PC-9 (cell line): ENCODE measurements at regions of chr3 and their contacts with region 1.

Region 1: DNA sequence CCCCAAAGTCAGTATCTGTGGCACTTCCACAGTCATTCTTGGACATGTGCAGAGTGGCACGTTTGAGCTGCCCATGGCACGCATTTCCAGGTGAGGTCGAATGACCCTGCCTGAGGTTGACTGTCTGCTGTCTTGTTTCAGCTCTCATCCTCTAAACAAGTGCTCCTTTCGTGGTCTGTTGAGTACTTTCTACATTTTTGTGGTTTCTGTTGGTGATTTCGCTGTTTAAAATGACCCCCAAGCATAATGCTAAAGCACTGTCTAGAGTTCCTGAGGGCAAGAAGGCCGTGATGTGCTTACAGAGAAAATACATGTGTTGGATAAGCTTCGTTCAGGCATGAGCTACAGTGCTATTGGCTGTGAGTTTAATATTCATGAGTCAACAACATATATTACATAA is 40.0 kb upstream of the SAMMSON start:
- DNase-seq: no peak
- H3K4me3 ChIP-seq: no peak overlapping the region
- H3K27ac ChIP-seq: no peak overlapping the region
- H3K4me1 ChIP-seq: no peaks in the 10 kb centered on the region
- H3K27me3 ChIP-seq: no peaks in the 10 kb centered on the region
- CTCF ChIP-seq: no peak

Region 2: DNA sequence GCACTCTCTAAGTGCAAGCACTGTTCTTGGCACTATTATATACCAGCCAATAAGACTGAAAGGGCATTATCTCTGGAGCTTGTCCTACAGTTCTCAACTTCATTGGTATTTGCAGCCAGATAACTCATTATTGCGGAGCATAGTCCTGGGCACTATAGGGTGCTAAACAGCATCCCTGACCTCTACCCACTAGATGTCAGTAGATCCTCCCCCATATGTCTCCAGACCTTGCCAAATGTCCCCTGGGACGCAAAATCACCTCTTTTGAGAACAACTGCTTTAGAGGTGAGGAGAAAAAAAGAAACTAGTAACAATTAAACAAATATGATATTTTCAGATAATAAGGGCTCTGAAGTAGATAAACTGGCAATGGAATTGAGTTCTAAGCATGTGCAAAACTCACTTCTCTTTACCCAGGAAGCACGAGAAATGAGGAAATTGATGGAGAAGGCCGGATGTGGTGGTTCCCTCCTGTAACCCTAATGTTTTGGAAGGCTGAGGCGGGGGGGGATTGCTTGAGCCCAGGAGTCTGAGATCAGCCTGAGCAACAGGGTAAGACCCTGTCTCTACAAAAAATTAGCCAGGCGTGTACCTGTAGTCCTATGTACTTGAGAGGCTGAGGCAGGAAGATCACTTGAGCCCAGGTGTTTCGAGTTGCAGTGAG is 635.1 kb before region 1 on chr3:
- CTCF ChIA-PET with region 1: no interaction called
- POLR2A ChIA-PET with region 1: no interaction called
- intact Hi-C with region 1: loop called (anchors 10 kb)
- DNase-seq: no peak
- H3K4me3 ChIP-seq: no peak overlapping the region
- H3K27ac ChIP-seq: no peak overlapping the region
- H3K4me1 ChIP-seq: no peaks in the 10 kb centered on the region
- H3K27me3 ChIP-seq: no peaks in the 10 kb centered on the region
- CTCF ChIP-seq: peak; percentile 33; the same call in 1 of the 2 replicates

Region 3: GRCh38 chr3:69855436-69856162 is 104.0 kb before region 1 on chr3:
- CTCF ChIA-PET with region 1: interaction called, 20 read pairs
- POLR2A ChIA-PET with region 1: no interaction called
- intact Hi-C with region 1: no loop called
- DNase-seq: no peak
- H3K4me3 ChIP-seq: no peak overlapping the region
- H3K27ac ChIP-seq: no peak overlapping the region
- H3K4me1 ChIP-seq: peaks cover 5% of the 10 kb centered on the region; the same call in 1 of the 2 replicates
- H3K27me3 ChIP-seq: no peaks in the 10 kb centered on the region
- CTCF ChIP-seq: peak; percentile 36; the same call in 1 of the 2 replicates